Panc1 (cell line): ENCODE measurements at regions of chr9 and their contacts with region 1.

Region 1: DNA sequence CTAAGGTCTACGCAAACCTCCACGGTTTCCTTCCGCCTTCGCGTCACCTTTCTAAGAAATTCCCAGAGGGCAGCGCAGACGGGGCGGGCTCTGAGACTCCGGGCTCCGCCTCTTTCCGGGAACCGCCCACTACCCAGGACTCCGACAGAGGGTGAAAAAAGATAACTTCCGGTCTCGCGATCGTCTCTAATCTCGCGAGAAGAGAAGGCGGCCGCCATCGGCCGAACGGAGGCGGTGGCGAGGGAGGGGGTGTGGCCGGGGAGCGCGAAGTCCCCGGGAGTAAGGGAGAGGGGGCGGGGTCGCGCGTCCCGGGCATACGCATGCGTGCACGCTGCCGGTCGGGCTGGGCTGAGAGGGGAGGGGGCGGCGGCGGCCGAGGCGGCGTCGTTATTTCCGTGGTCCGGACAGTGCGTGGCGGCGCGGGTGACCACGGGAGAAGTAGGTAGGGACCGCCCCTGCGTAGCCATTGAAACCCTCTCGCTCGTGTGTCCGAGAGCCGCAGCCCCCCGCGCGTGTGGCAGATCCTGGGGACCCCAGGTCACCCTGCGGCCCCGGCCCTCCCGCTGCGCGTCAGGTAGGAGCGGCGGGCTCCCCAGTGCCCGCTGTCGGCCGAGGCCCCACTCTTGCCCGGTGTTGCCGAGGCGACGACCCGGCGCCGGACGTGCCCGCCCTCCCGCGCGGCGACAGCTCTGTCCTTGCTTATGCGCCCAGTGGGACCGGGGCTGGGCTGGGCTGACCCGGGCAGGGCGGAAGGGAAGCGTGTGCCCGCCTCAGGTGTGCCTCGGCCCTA is at the start of gene NAA35:
- DNase-seq: peak; percentile 88
- ATAC-seq: peak; percentile 96
- H3K4me3 ChIP-seq: peak within 1 kb of the TSS; percentile 91 to 95
- H3K27ac ChIP-seq: peak within 1 kb of the TSS; percentile 95
- H3K4me1 ChIP-seq: peaks cover 8% of the 10 kb centered on the region; the same call in 1 of the 2 replicates
- H3K27me3 ChIP-seq: no peaks in the 10 kb centered on the region
- CTCF ChIP-seq: no peak
- total RNA-seq, gene NAA35: 21.3 TPM

Region 2: GRCh38 chr9:85960688-85961093 is 19.7 kb after region 1 on chr9:
- CTCF ChIA-PET with region 1: no interaction called
- POLR2A ChIA-PET with region 1: interaction called, 15 read pairs
- in situ Hi-C with region 1: no loop called
- intact Hi-C with region 1: no loop called
- DNase-seq: no peak
- ATAC-seq: no peak
- H3K4me3 ChIP-seq: no peak overlapping the region
- H3K27ac ChIP-seq: no peak overlapping the region
- H3K4me1 ChIP-seq: no peaks in the 10 kb centered on the region
- H3K27me3 ChIP-seq: no peaks in the 10 kb centered on the region
- CTCF ChIP-seq: no peak